Lower lobe of right lung (tissue), 2 donors: ENCODE measurements at regions of chr19 and their contacts with region 1.

Region 1: DNA sequence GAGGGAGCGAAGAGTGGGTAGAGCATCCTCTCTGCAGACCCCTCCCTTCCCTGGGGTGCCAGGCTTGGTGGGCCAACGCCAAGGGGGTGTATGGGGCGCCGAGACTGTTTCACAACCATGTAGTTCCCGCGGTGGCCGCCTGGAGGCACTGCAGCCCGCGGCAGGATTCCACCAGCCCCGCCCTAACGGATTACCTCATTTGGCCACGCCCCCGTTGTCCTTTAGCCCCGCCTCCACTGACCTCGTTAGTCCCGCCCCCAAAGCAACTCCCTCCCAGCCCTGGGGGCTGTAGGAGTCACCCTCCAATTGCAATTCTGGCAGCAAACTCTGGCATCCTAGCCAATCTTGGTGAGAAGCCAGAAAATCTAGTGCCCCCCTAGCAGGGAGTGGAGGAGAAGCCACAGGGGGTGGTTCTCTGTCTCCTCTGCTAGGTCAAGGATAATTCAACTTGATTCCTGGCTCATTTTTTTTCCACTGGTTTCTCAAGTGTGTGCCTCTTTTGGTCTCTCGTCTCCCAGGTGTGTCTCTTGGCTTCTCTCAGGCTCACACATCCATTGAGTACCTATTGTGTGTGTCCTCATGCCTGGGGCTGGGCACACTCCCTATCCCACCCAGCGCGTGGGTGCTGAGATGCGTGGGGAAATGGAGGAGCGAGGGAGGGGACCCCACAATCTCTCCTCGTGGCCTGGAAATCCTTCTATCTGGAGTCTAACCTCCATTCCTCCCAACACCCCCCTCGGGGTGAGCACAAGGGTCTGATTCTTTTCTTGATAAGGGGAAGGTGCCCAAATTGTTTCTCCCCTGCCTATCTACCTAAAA is 2.0 kb downstream of the OLFM2 start:
- DNase-seq: peak; percentile 72
- ATAC-seq: peak; percentile 68 to 89
- H3K4me3 ChIP-seq: no peak overlapping the region
- H3K27ac ChIP-seq: no peak overlapping the region
- H3K4me1 ChIP-seq: peaks cover 25% of the 10 kb centered on the region
- H3K27me3 ChIP-seq: peaks cover 62% of the 10 kb centered on the region
- CTCF ChIP-seq: peak; percentile 81

Region 2: DNA sequence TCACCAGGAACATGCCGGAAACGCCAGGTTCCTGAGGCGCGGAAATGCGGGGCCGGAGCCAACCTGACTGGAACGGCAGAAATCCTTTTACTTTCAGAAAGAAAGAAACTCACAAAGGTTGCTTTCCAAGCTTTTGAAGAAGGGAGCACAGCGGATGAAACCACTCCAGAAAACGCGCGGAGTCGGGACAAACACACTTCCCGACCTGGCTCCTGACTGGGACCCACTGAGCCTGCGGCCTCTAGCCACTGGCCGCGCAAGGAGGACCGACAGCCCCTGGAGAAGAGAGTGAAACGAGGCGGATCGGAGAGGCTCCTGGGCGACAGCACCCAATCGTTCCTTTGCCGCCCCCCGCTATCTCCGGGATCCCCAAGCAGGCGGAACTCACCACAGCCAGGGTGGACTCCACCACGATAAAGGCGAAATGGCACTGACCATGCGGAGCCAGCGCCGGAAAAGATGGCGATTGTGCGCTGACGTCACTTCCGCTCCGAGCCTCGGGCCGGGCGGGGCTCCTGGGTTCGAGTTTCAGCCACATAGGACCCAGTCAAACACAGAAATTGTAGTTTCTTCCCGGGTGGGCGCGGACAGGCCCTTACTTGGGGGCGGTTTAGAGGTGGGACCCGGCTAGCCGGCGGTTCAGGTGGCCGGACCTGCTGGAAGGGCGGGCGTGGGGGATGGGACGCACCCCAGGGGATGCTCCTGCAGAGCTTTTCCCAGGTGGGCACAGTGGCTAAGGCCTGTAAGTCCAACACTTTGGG is 350.1 kb before region 1 on chr19 and contains the start of gene ZNF121:
- intact Hi-C with region 1: no loop called
- DNase-seq: peak; percentile 91
- ATAC-seq: peak; percentile 96 to 98
- H3K4me3 ChIP-seq: peak within 1 kb of the TSS; percentile 89
- H3K27ac ChIP-seq: peak within 1 kb of the TSS; percentile 92
- H3K4me1 ChIP-seq: peaks cover 15% of the 10 kb centered on the region
- H3K27me3 ChIP-seq: no peaks in the 10 kb centered on the region
- CTCF ChIP-seq: no peak
- total RNA-seq, gene ZNF121: 23.2 TPM

Region 3: GRCh38 chr19:9903336-9903735 is 31.0 kb before region 1 on chr19:
- intact Hi-C with region 1: no loop called
- DNase-seq: no peak
- ATAC-seq: no peak
- H3K4me3 ChIP-seq: no peak overlapping the region
- H3K27ac ChIP-seq: no peak overlapping the region
- H3K4me1 ChIP-seq: no peaks in the 10 kb centered on the region
- H3K27me3 ChIP-seq: peaks cover 5% of the 10 kb centered on the region
- CTCF ChIP-seq: no peak

Region 4: DNA sequence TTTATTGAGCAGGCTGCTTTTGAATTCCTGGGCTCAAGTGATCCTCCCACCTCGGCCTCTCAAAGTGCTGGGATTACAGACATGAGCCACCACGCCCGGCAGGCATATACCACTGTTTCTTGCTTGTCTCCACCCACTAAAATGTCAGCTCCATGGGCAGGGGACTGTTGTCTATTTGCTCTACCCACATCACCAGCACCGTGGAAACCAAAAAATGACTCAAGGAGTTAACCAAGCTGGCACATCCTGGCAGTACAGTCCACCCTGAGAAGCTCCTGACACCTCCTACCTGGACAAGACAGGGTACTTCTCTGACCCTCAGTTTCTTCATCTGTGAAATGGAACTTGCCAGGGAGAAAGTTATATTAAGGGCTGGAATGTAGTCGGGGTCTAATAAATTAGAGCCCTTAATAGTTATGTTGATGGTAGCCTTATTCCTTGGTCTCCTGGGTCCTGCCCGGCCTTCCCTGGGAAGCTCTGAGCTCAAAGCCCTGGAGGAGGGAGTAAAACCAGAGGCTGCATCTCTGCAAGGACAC is 92.9 kb after region 1 on chr19:
- intact Hi-C with region 1: loop called (anchors 10 kb)
- DNase-seq: no peak
- ATAC-seq: peak in 1 of 2 donors; percentile 9
- H3K4me3 ChIP-seq: no peak overlapping the region
- H3K27ac ChIP-seq: no peak overlapping the region
- H3K4me1 ChIP-seq: peaks cover 7% of the 10 kb centered on the region
- H3K27me3 ChIP-seq: peaks cover 18% of the 10 kb centered on the region
- CTCF ChIP-seq: no peak